Caco-2 (cell line): ENCODE measurements at regions of chr9 and their contacts with region 1.

Region 1: GRCh38 chr9:87973730-87974292 is 522 bp downstream of the CDK20 start:
- DNase-seq: no peak
- H3K4me3 ChIP-seq: peak overlapping the region; percentile 48
- H3K4me3 Mint-ChIP-seq: peak overlapping the region; percentile 97
- H3K27ac Mint-ChIP-seq: peak overlapping the region; percentile 98
- H3K4me1 ChIP-seq: no peaks in the 10 kb centered on the region
- H3K4me1 Mint-ChIP-seq: peaks cover 7% of the 10 kb centered on the region
- H3K27me3 ChIP-seq: no peaks in the 10 kb centered on the region
- H3K27me3 Mint-ChIP-seq: no peaks in the 10 kb centered on the region
- CTCF ChIP-seq: no peak

Region 2: GRCh38 chr9:88076286-88077090 is 102.7 kb after region 1 on chr9:
- CTCF ChIA-PET with region 1: interaction called, 10 read pairs
- POLR2A ChIA-PET with region 1: no interaction called
- intact Hi-C with region 1: no loop called
- DNase-seq: peak; percentile 50 to 55
- H3K4me3 ChIP-seq: peak overlapping the region; percentile 41
- H3K4me3 Mint-ChIP-seq: peak overlapping the region; percentile 81
- H3K27ac Mint-ChIP-seq: peak overlapping the region; percentile 70
- H3K4me1 ChIP-seq: no peaks in the 10 kb centered on the region
- H3K4me1 Mint-ChIP-seq: peaks cover 8% of the 10 kb centered on the region
- H3K27me3 ChIP-seq: no peaks in the 10 kb centered on the region
- H3K27me3 Mint-ChIP-seq: no peaks in the 10 kb centered on the region
- CTCF ChIP-seq: no peak

Region 3: DNA sequence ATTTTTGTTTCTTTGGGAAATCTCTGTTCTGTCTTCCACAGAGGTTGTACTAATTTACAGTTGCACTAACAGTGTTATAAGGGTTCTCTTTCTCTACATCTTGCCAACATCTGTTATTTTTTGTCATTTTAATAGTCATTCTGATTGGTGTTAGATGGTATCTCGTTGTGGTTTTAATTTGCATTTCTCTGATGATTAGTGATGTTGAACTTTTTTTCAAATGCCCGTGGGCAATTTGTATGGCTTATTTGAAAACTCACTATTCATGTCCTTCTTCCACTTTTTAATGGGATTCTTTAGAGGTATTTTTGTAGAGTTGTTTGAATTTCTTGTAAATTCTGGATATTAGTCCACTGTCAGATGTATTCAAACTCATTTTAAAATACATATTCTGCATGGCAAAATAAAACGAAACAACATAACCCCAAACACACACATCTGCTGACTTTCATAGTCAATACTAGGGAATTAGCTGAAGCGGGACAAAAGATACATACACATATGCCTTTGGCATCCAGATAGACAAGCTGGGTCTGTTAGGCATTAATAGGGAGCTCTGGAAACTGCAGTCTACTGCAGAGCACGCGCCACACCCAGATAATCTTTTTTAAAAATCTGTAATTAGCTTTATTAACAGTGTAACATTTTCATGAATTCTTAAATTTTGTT is 170.3 kb after region 1 on chr9:
- CTCF ChIA-PET with region 1: no interaction called
- POLR2A ChIA-PET with region 1: no interaction called
- intact Hi-C with region 1: no loop called
- DNase-seq: no peak
- H3K4me3 ChIP-seq: no peak overlapping the region
- H3K4me3 Mint-ChIP-seq: no peak overlapping the region
- H3K27ac Mint-ChIP-seq: no peak overlapping the region
- H3K4me1 ChIP-seq: no peaks in the 10 kb centered on the region
- H3K4me1 Mint-ChIP-seq: peaks cover 6% of the 10 kb centered on the region
- H3K27me3 ChIP-seq: no peaks in the 10 kb centered on the region
- H3K27me3 Mint-ChIP-seq: no peaks in the 10 kb centered on the region
- CTCF ChIP-seq: no peak

Region 4: GRCh38 chr9:89185980-89186379 is 1212.2 kb after region 1 on chr9:
- CTCF ChIA-PET with region 1: no interaction called
- POLR2A ChIA-PET with region 1: no interaction called
- intact Hi-C with region 1: no loop called
- DNase-seq: peak in 1 of 2 experiments; percentile 36
- H3K4me3 ChIP-seq: no peak overlapping the region
- H3K4me3 Mint-ChIP-seq: no peak overlapping the region
- H3K27ac Mint-ChIP-seq: no peak overlapping the region
- H3K4me1 ChIP-seq: no peaks in the 10 kb centered on the region
- H3K4me1 Mint-ChIP-seq: no peaks in the 10 kb centered on the region
- H3K27me3 ChIP-seq: no peaks in the 10 kb centered on the region
- H3K27me3 Mint-ChIP-seq: peaks cover 3% of the 10 kb centered on the region
- CTCF ChIP-seq: no peak